ENCODE measurements at regions of chr11 and their contacts with region 1.

Region 1: DNA sequence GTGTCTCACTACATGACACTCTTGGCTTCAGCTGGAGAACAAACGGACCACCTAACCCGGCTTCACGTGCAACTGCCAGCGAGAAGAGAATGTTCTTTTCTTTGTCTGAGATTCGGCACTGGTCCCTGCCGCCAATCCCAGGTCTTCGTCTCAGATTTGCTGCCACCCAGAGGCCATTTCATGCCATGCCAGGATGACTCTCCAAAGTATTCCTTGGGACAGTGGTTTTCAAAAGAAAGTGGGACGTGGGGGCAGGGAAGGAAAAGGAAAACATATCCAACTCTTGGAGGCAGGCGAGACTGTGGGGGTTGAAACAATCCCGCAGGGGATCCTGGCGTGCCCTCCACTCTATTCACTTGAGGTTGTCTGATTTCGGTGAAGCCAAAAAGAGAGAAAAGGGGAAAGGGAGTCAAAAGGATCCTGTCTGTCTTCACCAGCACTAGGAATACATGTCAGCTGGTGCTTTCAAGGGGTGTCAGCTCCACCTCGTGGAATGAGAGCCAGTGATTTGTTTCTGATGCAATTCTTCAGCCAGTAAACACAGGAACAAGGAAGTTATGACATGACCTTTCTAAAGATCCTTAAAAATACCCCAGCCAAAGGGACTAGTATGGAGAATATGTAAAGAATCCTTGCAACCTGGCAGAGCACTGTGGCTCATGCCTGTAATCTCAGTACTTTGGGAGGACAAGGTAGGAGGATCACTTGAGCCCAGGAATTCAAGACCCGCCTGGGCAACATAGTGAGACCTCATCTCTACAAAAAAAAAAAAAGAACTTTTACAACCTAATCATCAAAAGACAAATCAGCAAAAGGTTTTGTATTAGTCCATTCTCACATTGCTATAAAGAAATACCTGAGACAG is 41.0 kb upstream of the APLNR start:
- DNase-seq: peak; percentile 11
- H3K4me3 Mint-ChIP-seq: no peak overlapping the region
- H3K27ac Mint-ChIP-seq: no peak overlapping the region
- H3K4me1 Mint-ChIP-seq: peaks cover 3% of the 10 kb centered on the region
- H3K27me3 Mint-ChIP-seq: peaks cover 20% of the 10 kb centered on the region

Region 2: GRCh38 chr11:56841210-56841810 is 436.8 kb before region 1 on chr11:
- intact Hi-C with region 1: loop called (anchors 1 kb)
- DNase-seq: no peak
- H3K4me3 Mint-ChIP-seq: no peak overlapping the region
- H3K27ac Mint-ChIP-seq: no peak overlapping the region
- H3K4me1 Mint-ChIP-seq: no peaks in the 10 kb centered on the region
- H3K27me3 Mint-ChIP-seq: no peaks in the 10 kb centered on the region

Region 3: GRCh38 chr11:57249384-57250319 is 28.4 kb before region 1 on chr11:
- intact Hi-C with region 1: no loop called
- DNase-seq: no peak
- H3K4me3 Mint-ChIP-seq: no peak overlapping the region
- H3K27ac Mint-ChIP-seq: no peak overlapping the region
- H3K4me1 Mint-ChIP-seq: peaks cover 7% of the 10 kb centered on the region
- H3K27me3 Mint-ChIP-seq: peaks cover 18% of the 10 kb centered on the region

Measured in activated T-helper 2 cell treated with anti-CD3 and anti-CD28 coated beads, Interferon-gamma antibody, Interleukin-2, Interleukin-4, amounts not matched to agents 10 μg/mL and 5 μg/mL and 100 μg/mL, durations not matched to agents 14 hours and 24 hours and 36 hours (primary cell).